ENCODE measurements at regions of chr7 and their contacts with region 1.

Region 1: DNA sequence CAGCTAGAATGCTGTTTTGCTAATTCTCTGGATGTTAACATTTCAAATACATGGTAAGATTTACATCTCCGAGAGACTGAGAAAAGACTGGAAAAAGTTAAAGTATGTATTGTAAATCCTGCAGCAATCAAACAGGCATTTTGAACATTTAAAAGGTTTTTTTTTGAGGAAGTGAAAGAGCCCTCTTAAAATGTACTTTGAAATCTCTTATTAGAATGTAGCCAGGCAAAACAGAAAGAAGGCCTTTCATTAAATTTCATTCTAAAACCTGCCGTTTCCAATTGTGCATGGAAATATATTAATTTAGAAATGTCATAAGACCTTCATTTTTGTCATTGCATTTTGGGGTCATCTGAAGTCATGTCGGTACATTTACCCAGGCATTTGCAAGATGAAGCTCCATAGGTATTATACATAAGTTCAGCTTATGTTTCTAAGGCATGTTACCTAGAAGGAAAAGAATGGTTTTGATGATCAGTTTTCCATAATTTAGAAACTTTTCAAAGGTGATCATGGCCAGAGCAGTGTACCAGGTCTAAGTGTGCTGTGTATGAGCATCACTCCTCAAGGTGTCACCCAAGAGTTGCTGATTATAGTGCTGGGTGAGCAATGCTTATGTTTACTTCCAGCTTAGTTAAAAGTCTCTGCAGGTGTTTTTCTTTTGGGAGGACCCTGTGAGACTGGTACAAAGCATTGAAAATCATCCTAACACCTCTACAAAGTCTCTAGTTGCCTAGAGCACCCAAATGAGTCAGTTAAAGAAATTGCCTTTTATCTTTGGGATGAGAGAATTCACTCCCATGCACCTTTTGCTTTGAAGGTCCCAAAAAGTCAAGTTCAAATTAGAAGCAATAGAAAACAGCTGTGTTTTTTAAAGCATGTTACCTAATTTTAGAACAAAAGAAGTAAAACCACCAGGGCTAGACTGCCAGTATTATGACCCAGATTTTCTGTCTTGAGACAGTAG is 7.1 kb downstream of the ZNF736 start:
- DNase-seq: no peak
- H3K4me3 ChIP-seq: no peak overlapping the region
- H3K27ac ChIP-seq: no peak overlapping the region
- H3K4me1 ChIP-seq: no peaks in the 10 kb centered on the region
- H3K27me3 ChIP-seq: no peaks in the 10 kb centered on the region
- CTCF ChIP-seq: peak in 1 of 2 donors; percentile 12

Region 2: DNA sequence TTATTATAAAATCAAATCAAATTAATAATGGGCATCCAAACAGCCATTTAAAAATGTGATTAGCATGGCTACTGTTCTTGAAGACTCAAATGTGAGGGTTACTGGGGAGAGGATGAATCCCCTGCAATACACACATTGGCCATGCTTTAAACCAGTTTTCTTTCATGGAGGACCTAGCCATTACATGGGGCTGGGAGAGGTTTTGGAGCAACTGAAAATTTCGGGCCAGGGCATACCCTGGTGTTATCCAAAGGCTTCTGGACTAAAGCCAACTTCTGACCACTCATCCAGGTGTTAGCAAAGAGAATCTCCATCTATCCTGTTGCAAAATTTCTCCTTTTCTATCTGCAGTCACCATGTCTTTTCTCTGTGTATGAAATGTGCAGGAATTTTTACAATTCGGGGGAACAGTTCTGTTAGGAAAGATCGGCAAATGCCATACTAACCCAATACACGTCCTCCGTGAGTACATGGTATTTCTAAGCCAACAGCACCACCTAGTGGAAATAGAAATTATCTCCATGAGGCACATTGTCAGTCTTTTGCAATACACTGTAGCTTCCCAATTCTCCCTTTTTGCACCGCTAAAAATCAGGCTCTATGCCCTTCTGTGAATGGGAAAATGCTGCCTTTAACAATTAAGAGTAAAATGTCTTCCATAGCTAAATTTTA is 298.1 kb after region 1 on chr7:
- CTCF ChIA-PET with region 1: no interaction called
- dilution Hi-C with region 1: no loop called
- in situ Hi-C with region 1: no loop called
- intact Hi-C with region 1: loop called (anchors 5 kb)
- DNase-seq: peak; percentile 44
- H3K4me3 ChIP-seq: no peak overlapping the region
- H3K27ac ChIP-seq: no peak overlapping the region
- H3K4me1 ChIP-seq: no peaks in the 10 kb centered on the region
- H3K27me3 ChIP-seq: no peaks in the 10 kb centered on the region
- CTCF ChIP-seq: peak; percentile 31 to 62

Measured in mammary epithelial cell (primary cell).